CD4-positive, alpha-beta T cell (primary cell): ENCODE measurements at regions of chr2 and their contacts with region 1.

Region 1: DNA sequence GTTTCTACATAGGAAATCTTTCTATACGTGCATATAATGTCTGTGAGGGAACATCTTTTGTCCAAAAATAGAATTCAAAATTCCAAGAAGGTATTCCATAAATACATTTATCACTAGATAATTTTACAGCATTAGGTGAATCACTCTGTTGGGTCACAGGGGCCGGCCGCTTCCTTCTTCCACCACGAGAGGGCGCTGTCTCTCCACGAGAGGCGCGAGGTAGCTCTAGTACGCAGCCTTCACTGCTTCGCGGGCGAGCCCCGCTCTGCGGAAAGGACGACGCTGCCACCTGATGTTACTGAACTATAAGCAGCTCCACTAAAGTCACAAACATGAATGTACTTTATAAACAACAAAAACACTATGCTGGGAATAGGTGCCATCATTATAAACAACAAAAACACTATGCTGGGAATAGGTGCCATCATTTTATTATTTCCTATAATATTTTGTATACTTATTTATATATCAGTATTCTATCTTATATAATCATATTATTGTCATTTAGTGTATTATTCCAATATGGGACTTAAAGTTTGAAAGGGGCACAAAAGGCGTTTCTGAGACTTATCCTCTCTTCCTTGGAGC is 69.4 kb upstream of the REV1 start:
- DNase-seq: peak; percentile 70 to 93 (median 84)
- ATAC-seq: peak; percentile 97
- H3K4me3 ChIP-seq: no peak overlapping the region
- H3K4me3 Mint-ChIP-seq: no peak overlapping the region
- H3K27ac ChIP-seq: no peak overlapping the region
- H3K27ac Mint-ChIP-seq: no peak overlapping the region
- H3K4me1 ChIP-seq: peaks cover 2% of the 10 kb centered on the region
- H3K4me1 Mint-ChIP-seq: peaks cover 10% of the 10 kb centered on the region
- H3K27me3 ChIP-seq: no peaks in the 10 kb centered on the region
- H3K27me3 Mint-ChIP-seq: no peaks in the 10 kb centered on the region
- CTCF ChIP-seq: peak; percentile 99

Region 2: DNA sequence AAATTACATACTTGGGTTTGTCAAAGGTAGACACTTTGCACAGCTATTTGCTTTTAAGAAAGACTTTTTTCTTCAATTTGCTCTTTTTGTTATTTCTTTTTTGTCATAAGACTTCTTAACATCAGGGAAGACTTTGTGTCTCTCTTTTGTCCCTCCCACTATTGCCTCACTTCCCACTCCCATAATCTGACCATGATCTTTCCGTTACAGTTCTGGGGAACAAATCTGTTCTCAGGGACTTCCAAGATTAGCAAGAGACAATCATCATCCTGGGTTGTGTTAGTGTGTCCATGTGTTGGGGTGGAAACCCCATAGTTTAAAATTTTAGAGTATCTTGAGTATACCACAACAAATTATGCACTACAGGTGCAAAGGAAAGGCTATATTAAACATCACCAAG is 144.6 kb before region 1 on chr2:
- CTCF ChIA-PET with region 1: no interaction called
- POLR2A ChIA-PET with region 1: no interaction called
- intact Hi-C with region 1: no loop called
- DNase-seq: no peak
- ATAC-seq: no peak
- H3K4me3 ChIP-seq: no peak overlapping the region
- H3K4me3 Mint-ChIP-seq: no peak overlapping the region
- H3K27ac ChIP-seq: no peak overlapping the region
- H3K27ac Mint-ChIP-seq: no peak overlapping the region
- H3K4me1 ChIP-seq: no peaks in the 10 kb centered on the region
- H3K4me1 Mint-ChIP-seq: no peaks in the 10 kb centered on the region
- H3K27me3 ChIP-seq: no peaks in the 10 kb centered on the region
- H3K27me3 Mint-ChIP-seq: no peaks in the 10 kb centered on the region
- CTCF ChIP-seq: no peak

Region 3: DNA sequence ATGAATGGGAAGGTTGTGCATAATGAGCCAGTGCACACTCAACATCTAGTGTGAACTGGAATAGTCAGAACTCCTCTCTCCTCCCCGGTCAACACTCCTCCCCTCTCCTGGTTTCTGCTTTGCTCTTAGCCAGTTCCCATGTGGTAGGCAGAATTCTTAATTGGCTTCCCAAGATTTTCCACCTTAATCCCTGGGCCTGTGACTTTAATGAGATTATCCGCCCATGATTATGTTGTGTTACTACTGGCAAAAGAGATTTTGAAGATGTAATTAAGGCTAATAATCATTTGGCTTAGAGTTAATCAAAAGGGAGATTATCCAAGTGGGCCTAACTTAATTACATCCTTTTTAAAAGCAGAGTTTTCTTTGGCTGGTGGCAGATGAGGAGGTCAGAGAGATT is 35.1 kb before region 1 on chr2:
- CTCF ChIA-PET with region 1: no interaction called
- POLR2A ChIA-PET with region 1: no interaction called
- intact Hi-C with region 1: no loop called
- DNase-seq: no peak
- ATAC-seq: no peak
- H3K4me3 ChIP-seq: no peak overlapping the region
- H3K4me3 Mint-ChIP-seq: no peak overlapping the region
- H3K27ac ChIP-seq: no peak overlapping the region
- H3K27ac Mint-ChIP-seq: no peak overlapping the region
- H3K4me1 ChIP-seq: no peaks in the 10 kb centered on the region
- H3K4me1 Mint-ChIP-seq: no peaks in the 10 kb centered on the region
- H3K27me3 ChIP-seq: no peaks in the 10 kb centered on the region
- H3K27me3 Mint-ChIP-seq: peaks cover 19% of the 10 kb centered on the region
- CTCF ChIP-seq: no peak

Region 4: GRCh38 chr2:99545066-99545465 is 14.1 kb before region 1 on chr2:
- CTCF ChIA-PET with region 1: no interaction called
- POLR2A ChIA-PET with region 1: no interaction called
- intact Hi-C with region 1: no loop called
- DNase-seq: no peak
- ATAC-seq: no peak
- H3K4me3 ChIP-seq: no peak overlapping the region
- H3K4me3 Mint-ChIP-seq: no peak overlapping the region
- H3K27ac ChIP-seq: no peak overlapping the region
- H3K27ac Mint-ChIP-seq: no peak overlapping the region
- H3K4me1 ChIP-seq: no peaks in the 10 kb centered on the region
- H3K4me1 Mint-ChIP-seq: no peaks in the 10 kb centered on the region
- H3K27me3 ChIP-seq: peaks cover 0 to 3% of the 10 kb centered on the region in 2 experiments
- H3K27me3 Mint-ChIP-seq: no peaks in the 10 kb centered on the region
- CTCF ChIP-seq: no peak

Region 5: DNA sequence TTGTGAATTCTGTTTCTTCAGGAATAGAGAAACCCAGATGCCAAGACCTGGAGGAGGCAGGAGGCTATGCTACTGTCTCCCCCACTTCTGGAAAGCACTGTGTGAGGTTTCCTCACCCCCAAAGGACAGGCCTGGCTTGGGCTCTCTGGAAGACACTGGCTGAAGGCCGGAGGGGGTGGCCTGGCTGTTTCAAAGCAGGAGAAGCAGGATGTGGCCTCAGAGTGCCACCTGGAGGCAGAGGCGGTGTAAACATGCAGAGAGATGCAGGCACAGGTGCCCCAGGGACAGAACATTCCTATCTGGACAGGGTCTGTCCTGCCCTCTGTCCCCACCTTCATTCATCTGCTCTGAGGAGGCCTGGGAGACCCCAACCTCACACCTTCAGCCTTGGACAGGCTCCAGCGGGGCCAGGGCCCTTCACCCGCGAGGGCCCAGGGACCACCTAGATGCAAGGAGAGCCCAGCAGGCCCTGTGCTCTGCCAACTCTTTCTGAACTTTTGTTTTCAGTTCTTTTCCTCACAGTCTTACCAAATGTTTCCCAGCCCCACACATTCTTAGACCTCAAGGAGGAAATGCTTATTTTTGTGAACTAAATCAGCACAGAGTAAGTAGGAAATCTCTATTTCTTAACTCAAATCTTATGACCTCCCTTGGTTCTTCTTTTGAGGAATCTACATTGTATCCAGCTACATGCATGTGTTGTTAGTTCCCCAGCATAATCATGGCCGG is 683.9 kb after region 1 on chr2:
- CTCF ChIA-PET with region 1: interaction called, 6 read pairs
- POLR2A ChIA-PET with region 1: no interaction called
- intact Hi-C with region 1: loop called in 1 of 2 experiments (anchors 1 kb)
- DNase-seq: peak; percentile 19 to 63 (median 32)
- ATAC-seq: no peak
- H3K4me3 ChIP-seq: no peak overlapping the region
- H3K4me3 Mint-ChIP-seq: no peak overlapping the region
- H3K27ac ChIP-seq: no peak overlapping the region
- H3K27ac Mint-ChIP-seq: no peak overlapping the region
- H3K4me1 ChIP-seq: no peaks in the 10 kb centered on the region
- H3K4me1 Mint-ChIP-seq: no peaks in the 10 kb centered on the region
- H3K27me3 ChIP-seq: peaks cover 0 to 3% of the 10 kb centered on the region in 2 experiments
- H3K27me3 Mint-ChIP-seq: peaks cover 2% of the 10 kb centered on the region
- CTCF ChIP-seq: peak; percentile 62

Region 6: DNA sequence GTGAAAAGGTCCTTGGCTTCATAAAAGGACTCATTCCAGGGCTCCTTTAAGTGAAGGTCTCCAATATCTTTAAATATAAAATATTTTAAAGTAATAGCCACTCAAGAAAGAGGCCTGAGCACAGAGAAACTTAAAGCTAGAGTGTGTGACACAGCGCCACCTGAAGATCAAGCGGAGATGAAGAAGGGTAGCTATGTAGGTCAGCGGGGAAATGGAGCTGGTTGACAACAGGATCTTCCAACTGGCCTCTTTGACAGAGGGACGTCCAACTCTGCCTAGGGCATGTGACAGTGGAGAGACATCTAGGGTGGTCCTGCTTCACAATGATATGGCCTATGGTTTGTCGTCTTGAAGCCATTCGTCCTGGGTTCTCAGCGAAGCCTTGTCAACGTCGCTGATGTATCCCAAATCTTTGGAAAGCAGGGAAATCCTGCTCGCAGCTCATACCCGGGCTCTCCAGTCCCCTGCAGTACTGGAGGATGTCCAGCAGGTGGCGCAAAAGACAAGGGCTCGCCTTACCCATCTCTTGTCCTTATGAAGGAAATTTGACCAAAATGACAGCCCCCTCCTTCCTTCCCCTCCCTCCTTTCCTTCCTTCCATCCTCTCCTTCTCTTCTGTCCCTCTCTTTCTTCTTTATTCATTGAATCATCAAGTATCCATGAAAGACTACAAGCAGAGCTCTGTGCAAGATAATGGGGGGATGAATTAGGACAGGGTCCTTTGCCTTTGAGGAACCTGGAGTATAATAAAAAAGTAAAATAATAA is 703.6 kb after region 1 on chr2:
- CTCF ChIA-PET with region 1: interaction called, 3 read pairs
- POLR2A ChIA-PET with region 1: no interaction called
- intact Hi-C with region 1: loop called (anchors 5 kb)
- DNase-seq: peak; percentile 19 to 70 (median 44)
- ATAC-seq: peak; percentile 62
- H3K4me3 ChIP-seq: no peak overlapping the region
- H3K4me3 Mint-ChIP-seq: no peak overlapping the region
- H3K27ac ChIP-seq: no peak overlapping the region
- H3K27ac Mint-ChIP-seq: no peak overlapping the region
- H3K4me1 ChIP-seq: no peaks in the 10 kb centered on the region
- H3K4me1 Mint-ChIP-seq: no peaks in the 10 kb centered on the region
- H3K27me3 ChIP-seq: no peaks in the 10 kb centered on the region
- H3K27me3 Mint-ChIP-seq: no peaks in the 10 kb centered on the region
- CTCF ChIP-seq: peak; percentile 89

Region 7: GRCh38 chr2:100381240-100381639 is 822.1 kb after region 1 on chr2:
- CTCF ChIA-PET with region 1: interaction called, 4 read pairs
- POLR2A ChIA-PET with region 1: no interaction called
- intact Hi-C with region 1: loop called in 1 of 2 experiments (anchors 2 kb)
- DNase-seq: peak; percentile 39 to 77 (median 57)
- ATAC-seq: no peak
- H3K4me3 ChIP-seq: no peak overlapping the region
- H3K4me3 Mint-ChIP-seq: no peak overlapping the region
- H3K27ac ChIP-seq: no peak overlapping the region
- H3K27ac Mint-ChIP-seq: no peak overlapping the region
- H3K4me1 ChIP-seq: no peaks in the 10 kb centered on the region
- H3K4me1 Mint-ChIP-seq: no peaks in the 10 kb centered on the region
- H3K27me3 ChIP-seq: no peaks in the 10 kb centered on the region
- H3K27me3 Mint-ChIP-seq: no peaks in the 10 kb centered on the region
- CTCF ChIP-seq: peak; percentile 90